Psoas muscle (tissue), 8 donors: ENCODE measurements at regions of chr3 and their contacts with region 1.

Region 1: GRCh38 chr3:111895079-111895478 is 36.0 kb downstream of the PHLDB2 start:
- DNase-seq: no peak
- ATAC-seq: peak; percentile 58 to 78 (median 68)
- H3K4me3 ChIP-seq: no peak overlapping the region
- H3K27ac ChIP-seq: no peak overlapping the region
- H3K4me1 ChIP-seq: no peaks in the 10 kb centered on the region
- H3K27me3 ChIP-seq: no peaks in the 10 kb centered on the region
- CTCF ChIP-seq: peak; percentile 53

Region 2: GRCh38 chr3:111944377-111944776 is 49.3 kb after region 1 on chr3:
- intact Hi-C with region 1: loop called in 1 of 2 experiments (anchors 5 kb)
- DNase-seq: no peak
- ATAC-seq: no peak
- H3K4me3 ChIP-seq: no peak overlapping the region
- H3K27ac ChIP-seq: no peak overlapping the region
- H3K4me1 ChIP-seq: no peaks in the 10 kb centered on the region
- H3K27me3 ChIP-seq: peaks cover 0 to 4% (median 0%) of the 10 kb centered on the region in 3 donors
- CTCF ChIP-seq: no peak